Ovary (tissue), 10 donors: ENCODE measurements at regions of chr6 and their contacts with region 1.

Region 1: DNA sequence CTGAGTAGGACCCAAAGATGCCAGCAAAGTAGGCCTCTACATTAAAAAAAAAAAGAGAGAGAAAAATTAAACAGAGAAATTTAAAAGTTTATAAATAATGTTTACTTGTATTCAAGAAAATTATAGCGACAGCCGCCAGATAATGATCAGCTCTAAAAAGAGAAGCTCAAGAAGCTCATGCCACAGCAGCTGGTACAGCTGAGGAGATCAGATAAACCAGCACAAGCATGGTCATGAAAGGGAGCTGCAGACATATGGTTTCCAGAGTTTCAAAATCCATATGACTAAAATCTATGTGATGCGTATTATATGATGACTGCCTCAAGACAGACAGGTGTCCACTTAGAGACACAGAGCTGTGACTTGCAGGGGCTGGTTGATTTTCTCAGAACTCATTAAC is 13.6 kb upstream of the HLA-C start:
- DNase-seq: no peak
- H3K4me3 ChIP-seq: no peak overlapping the region
- H3K27ac ChIP-seq: no peak overlapping the region
- H3K4me1 ChIP-seq: no peaks in the 10 kb centered on the region
- H3K27me3 ChIP-seq: no peaks in the 10 kb centered on the region
- CTCF ChIP-seq: no peak
- EP300 ChIP-seq: no peak
- POLR2A ChIP-seq: no peak

Region 2: DNA sequence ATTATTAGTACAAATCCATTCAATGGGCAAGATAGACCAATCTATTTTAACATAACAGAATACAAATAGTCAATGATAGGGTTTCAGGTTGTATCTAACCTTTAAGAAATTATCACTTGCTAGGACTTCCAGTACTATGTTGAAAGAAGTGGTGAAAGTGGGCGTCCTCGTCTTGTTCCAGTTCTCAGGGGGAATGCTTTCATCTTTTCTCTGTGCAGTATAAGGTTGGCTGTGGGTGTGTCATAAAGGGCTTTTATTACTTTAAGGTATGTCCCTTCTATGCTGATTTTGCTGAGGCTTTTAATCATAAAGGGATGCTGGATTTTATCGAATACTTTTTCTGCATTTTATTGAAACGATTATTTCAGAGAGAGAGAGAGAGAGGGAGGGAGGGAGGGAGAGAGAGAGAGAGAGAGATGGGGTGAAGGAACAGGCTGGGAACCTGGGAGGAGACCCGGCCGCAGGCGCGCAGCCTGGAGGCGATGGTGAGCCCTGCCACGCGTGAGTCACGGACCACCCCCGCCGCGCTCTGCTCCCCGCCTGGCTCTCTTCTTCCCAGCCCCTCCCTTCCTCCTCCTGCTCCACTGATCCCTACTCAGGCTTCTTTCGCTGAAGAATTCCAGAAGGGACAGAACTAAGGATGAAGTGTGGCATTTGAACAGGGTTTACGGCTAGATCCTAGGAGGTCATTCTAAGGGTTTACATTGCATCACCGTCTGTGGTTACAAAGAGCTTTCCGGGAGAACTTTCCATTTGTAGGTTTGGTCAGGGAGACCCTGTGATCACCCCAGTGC is 841.6 kb before region 1 on chr6:
- intact Hi-C with region 1: no loop called
- DNase-seq: no peak
- H3K4me3 ChIP-seq: no peak overlapping the region
- H3K27ac ChIP-seq: no peak overlapping the region
- H3K4me1 ChIP-seq: no peaks in the 10 kb centered on the region
- H3K27me3 ChIP-seq: no peaks in the 10 kb centered on the region
- CTCF ChIP-seq: no peak
- EP300 ChIP-seq: no peak
- POLR2A ChIP-seq: no peak

Region 3: GRCh38 chr6:31474871-31475286 is 189.4 kb after region 1 on chr6:
- intact Hi-C with region 1: loop called in 1 of 4 experiments (anchors 10 kb)
- DNase-seq: no peak
- H3K4me3 ChIP-seq: no peak overlapping the region
- H3K27ac ChIP-seq: no peak overlapping the region
- H3K4me1 ChIP-seq: no peaks in the 10 kb centered on the region
- H3K27me3 ChIP-seq: no peaks in the 10 kb centered on the region
- CTCF ChIP-seq: no peak
- EP300 ChIP-seq: no peak
- POLR2A ChIP-seq: no peak

Region 4: DNA sequence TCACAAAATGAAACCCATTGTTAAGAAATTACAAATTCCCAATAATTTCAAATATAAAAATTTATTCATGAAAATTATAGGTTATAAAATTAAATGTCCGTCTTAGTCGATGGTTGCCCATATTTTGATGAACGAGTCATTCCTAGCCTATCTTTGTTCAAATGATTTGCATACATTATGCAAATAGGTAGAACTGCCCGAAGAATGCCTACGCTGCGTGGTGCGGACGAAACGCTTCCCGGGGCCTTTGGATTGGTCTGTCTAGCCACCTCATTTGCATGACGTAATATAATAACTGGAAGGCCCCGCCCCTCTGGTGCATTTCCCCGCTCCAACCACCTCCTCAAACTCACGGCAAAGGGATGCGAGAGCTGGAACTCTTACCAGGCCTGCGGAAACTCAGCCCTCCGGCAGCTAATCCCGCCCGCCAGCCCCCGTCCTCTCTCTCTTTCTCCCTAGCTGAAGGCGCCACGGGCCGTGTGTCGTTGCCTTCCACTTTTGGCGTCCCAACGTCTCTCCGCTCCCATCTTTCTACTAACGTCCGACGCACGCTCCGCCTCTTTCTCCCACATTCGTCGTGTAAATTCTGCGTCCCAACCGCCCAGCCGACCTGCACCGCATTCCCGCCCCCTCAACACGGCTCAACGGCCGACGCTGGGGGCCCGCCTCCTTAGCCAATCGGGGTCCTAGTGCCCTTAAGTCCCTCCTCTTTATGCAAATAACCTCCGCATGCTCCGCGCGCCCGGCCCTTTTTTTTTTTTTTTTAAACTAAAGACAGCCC is 334.5 kb after region 1 on chr6:
- intact Hi-C with region 1: no loop called
- DNase-seq: peak; percentile 97 to 98 (median 98)
- H3K4me3 ChIP-seq: peak overlapping the region; percentile 82
- H3K27ac ChIP-seq: peak overlapping the region; percentile 82 to 98
- H3K4me1 ChIP-seq: peaks cover 1% of the 10 kb centered on the region
- H3K27me3 ChIP-seq: no peaks in the 10 kb centered on the region
- CTCF ChIP-seq: peak in 1 of 3 donors; percentile 55
- EP300 ChIP-seq: peak; percentile 10
- POLR2A ChIP-seq: peak; percentile 98